ENCODE measurements at regions of chr15 and their contacts with region 1.

Region 1: DNA sequence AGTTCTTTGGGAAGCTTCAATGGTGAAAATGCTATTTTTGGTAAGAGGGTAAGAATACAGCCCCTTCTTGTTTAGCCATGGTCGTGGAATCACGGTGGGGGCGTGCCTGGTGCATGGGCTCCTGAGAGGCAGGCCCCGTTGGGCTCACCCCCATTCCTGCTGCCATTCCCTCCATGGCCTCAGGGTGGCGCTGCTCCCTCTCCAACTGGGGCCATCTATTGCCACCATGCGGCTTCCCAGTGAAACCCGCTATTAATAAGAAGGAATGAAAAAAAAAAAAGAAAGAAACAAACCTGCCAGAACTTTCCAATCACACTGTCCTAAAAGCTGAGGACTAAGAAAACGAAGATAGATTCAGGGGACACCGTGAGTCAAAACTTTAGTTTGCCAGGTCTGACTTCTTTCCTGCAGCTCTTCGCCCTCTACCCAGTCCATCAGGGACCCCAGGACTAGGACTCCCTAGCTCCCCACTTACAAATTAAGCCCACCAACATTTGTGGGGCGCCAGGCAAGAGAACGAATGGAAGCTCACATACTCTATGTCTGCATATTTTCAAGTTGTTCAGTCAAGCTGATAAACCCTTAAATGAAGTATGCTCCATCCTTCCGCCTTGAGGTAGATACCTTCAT is 30.6 kb upstream of the ABHD2 start:
- DNase-seq: peak; percentile 86
- H3K4me3 ChIP-seq: no peak overlapping the region
- H3K27ac ChIP-seq: no peak overlapping the region
- H3K4me1 ChIP-seq: no peaks in the 10 kb centered on the region
- H3K27me3 ChIP-seq: no peaks in the 10 kb centered on the region
- CTCF ChIP-seq: peak; percentile 99

Region 2: DNA sequence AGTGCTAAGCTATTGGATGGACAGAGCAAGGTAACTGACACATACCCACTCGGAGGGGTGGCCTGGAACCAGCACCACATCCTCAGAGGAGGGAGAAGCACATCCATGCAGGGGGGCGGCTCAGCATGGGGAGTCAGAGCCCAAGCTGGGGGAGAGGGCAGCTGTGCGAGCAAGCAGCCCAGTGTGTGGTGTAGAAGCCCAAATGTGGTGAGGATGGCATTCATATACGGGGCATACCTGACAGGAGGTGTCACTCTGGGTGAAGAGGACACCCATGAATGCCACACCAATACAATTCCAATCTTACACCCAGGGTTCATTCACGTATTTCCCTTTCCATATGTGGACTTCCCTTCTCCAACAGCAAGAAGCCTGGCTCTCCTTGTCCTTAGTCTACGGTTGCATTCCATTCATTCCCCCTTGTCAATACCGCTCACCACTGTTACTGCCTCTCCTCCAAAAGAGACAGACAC is 313.0 kb before region 1 on chr15:
- CTCF ChIA-PET with region 1: no interaction called
- POLR2A ChIA-PET with region 1: no interaction called
- intact Hi-C with region 1: no loop called
- DNase-seq: no peak
- H3K4me3 ChIP-seq: no peak overlapping the region
- H3K27ac ChIP-seq: no peak overlapping the region
- H3K4me1 ChIP-seq: no peaks in the 10 kb centered on the region
- H3K27me3 ChIP-seq: peaks cover 75% of the 10 kb centered on the region
- CTCF ChIP-seq: no peak

Region 3: GRCh38 chr15:89177633-89178306 is 120.2 kb after region 1 on chr15:
- CTCF ChIA-PET with region 1: interaction called, 14 read pairs
- POLR2A ChIA-PET with region 1: no interaction called
- intact Hi-C with region 1: loop called (anchors 1 kb)
- DNase-seq: peak; percentile 82
- H3K4me3 ChIP-seq: no peak overlapping the region
- H3K27ac ChIP-seq: no peak overlapping the region
- H3K4me1 ChIP-seq: no peaks in the 10 kb centered on the region
- H3K27me3 ChIP-seq: no peaks in the 10 kb centered on the region
- CTCF ChIP-seq: peak; percentile 92